Activated naive CD4-positive, alpha-beta T cell treated with anti-CD3 and anti-CD28 coated beads, Interleukin-2, amount 10 ng/mL, durations not matched to agents 7 days and 5 days (primary cell): ENCODE measurements at regions of chr7 and their contacts with region 1.

Region 1: DNA sequence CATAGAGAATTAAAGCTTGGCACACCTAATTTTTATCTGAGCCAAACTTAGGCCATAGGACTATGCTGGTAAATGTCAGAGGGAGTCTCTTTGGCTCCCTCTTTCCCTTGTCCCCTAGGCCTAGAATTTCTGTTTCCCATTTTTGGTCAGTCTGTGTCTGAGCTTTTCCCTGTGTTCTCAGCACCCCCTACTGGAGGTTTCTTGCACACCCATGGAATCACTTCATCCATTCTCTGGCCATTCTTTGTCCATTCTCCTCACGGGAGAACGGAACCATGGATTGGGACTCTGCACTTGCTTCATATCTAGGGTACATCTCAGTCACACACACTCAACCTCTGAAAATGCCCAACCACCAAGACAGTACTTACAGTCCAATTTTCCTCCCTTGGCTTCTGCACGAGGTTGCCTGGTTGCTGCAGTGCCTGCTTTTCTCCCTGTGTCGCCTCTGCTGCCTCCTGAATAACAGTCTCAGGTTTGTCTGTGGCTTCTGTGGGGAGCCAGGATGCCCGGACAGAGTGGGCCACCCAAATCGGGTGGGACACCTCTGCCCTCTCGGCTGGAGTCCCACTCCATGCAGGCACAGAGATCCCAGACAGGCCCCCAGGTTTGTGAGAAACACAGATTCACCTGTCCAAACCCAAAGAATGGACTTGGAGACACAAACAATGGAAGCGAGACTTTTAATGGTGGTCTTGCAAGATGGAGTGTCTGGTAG is 35.1 kb upstream of the DNAH11 start:
- DNase-seq: peak; percentile 37
- H3K4me3 Mint-ChIP-seq: no peak overlapping the region
- H3K27ac Mint-ChIP-seq: no peak overlapping the region
- H3K4me1 Mint-ChIP-seq: peaks cover 8% of the 10 kb centered on the region
- H3K27me3 Mint-ChIP-seq: no peaks in the 10 kb centered on the region

Region 2: DNA sequence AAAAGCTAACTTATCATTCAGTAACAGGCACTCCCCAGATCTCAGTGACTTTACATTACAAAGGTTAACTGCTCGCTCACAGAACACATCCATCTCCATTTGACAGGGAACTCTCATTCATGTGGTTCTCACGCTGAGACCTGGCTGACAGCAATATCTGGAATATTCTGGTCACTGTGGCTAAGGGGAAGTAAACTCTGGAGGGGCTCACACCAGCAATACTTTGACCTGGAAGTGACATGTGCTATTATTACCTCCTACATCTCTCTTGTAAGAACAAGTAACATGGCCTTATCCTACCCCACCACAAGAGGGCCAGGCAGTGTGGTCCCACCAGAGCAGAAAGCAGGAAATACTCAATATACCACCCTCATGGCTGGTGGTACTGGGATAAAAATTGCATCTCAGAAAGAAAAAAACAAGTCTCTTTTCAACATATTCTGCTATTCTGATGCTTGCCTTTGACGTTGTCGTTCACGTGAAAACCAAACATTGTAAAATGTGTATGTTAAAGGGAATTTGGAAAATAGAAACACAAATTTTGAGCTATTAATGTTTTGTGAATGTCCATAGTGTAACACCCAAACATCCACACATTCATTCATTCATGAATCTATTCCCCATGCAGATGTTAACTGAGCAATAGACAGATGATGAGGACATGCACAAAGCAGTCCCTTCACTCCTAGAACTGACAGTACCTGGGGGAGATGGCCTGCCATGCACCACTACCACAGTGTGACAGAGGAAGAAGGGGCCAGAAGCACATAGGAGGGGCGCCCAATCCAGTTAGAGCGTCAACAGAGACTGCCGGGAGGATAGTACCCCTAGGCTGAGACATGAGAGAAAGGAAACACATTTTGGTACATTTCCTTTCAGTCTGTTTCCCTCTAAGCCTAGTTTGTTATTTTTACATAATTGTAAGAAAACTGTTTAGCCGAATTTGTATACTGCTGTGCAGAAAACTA is 245.9 kb before region 1 on chr7:
- CTCF ChIA-PET with region 1: interaction called, 12 read pairs
- DNase-seq: peak; percentile 68
- H3K4me3 Mint-ChIP-seq: no peak overlapping the region
- H3K27ac Mint-ChIP-seq: no peak overlapping the region
- H3K4me1 Mint-ChIP-seq: peaks cover 15% of the 10 kb centered on the region
- H3K27me3 Mint-ChIP-seq: no peaks in the 10 kb centered on the region

Region 3: GRCh38 chr7:21526007-21526406 is 18.2 kb after region 1 on chr7:
- CTCF ChIA-PET with region 1: no interaction called
- DNase-seq: no peak
- H3K4me3 Mint-ChIP-seq: no peak overlapping the region
- H3K27ac Mint-ChIP-seq: no peak overlapping the region
- H3K4me1 Mint-ChIP-seq: no peaks in the 10 kb centered on the region
- H3K27me3 Mint-ChIP-seq: peaks cover 8% of the 10 kb centered on the region